ENCODE measurements at regions of chr1 and their contacts with region 1.

Region 1: GRCh38 chr1:179251675-179252074 is 22.2 kb upstream of the ABL2 start:
- DNase-seq: no peak
- H3K4me3 ChIP-seq: no peak overlapping the region
- CTCF ChIP-seq: peak; percentile 35

Region 2: DNA sequence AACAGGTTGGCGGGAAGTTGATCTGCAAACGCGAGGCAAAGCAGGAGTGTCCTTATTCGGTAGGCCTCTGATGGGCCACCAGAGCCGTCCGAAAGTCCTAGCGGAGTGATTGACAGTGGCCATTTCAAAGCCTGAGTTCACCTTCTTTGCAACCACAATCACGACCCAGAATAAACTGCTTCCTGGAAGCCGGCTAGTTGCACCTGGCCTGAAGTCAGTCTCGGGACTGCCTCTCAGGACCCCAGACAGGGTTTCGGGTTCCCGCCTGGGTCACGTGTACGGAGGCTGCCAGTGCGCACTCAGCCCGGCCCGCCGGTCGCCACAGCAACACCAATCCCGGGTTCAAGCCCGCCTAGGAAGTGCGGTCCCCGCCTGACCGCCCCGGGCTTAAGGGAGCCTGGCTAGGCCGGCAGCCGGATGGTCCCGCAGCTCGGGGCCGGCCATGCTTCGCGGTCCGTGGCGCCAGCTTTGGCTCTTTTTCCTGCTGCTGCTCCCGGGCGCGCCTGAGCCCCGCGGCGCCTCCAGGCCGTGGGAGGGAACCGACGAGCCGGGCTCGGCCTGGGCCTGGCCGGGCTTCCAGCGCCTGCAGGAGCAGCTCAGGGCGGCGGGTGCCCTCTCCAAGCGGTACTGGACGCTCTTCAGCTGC is 169.9 kb before region 1 on chr1 and contains the start of gene TOR3A:
- CTCF ChIA-PET with region 1: interaction called, 26 read pairs
- POLR2A ChIA-PET with region 1: no interaction called
- DNase-seq: peak; percentile 29
- H3K4me3 ChIP-seq: peak within 1 kb of the TSS; percentile 86
- CTCF ChIP-seq: no peak

Region 3: GRCh38 chr1:179293340-179294327 is 42.0 kb after region 1 on chr1 and contains the start of gene SOAT1:
- CTCF ChIA-PET with region 1: interaction called, 18 read pairs
- POLR2A ChIA-PET with region 1: no interaction called
- DNase-seq: peak; percentile 37
- H3K4me3 ChIP-seq: peak within 1 kb of the TSS; percentile 84
- CTCF ChIP-seq: peak; percentile 58

Region 4: GRCh38 chr1:179365320-179366092 is 113.8 kb after region 1 on chr1 and contains the start of gene AXDND1:
- CTCF ChIA-PET with region 1: interaction called, 159 read pairs
- POLR2A ChIA-PET with region 1: interaction called, 3 read pairs
- DNase-seq: no peak
- H3K4me3 ChIP-seq: peak within 1 kb of the TSS; percentile 84
- CTCF ChIP-seq: no peak

Region 5: GRCh38 chr1:179476484-179476883 is 224.8 kb after region 1 on chr1:
- CTCF ChIA-PET with region 1: no interaction called
- POLR2A ChIA-PET with region 1: no interaction called
- DNase-seq: no peak
- H3K4me3 ChIP-seq: no peak overlapping the region
- CTCF ChIP-seq: no peak

Region 6: GRCh38 chr1:179599623-179600249 is 348.1 kb after region 1 on chr1:
- CTCF ChIA-PET with region 1: interaction called, 12 read pairs
- POLR2A ChIA-PET with region 1: no interaction called
- DNase-seq: no peak
- H3K4me3 ChIP-seq: no peak overlapping the region
- CTCF ChIP-seq: peak; percentile 23